Posterior vena cava (tissue), 2 donors: ENCODE measurements at regions of chr16 and their contacts with region 1.

Region 1: DNA sequence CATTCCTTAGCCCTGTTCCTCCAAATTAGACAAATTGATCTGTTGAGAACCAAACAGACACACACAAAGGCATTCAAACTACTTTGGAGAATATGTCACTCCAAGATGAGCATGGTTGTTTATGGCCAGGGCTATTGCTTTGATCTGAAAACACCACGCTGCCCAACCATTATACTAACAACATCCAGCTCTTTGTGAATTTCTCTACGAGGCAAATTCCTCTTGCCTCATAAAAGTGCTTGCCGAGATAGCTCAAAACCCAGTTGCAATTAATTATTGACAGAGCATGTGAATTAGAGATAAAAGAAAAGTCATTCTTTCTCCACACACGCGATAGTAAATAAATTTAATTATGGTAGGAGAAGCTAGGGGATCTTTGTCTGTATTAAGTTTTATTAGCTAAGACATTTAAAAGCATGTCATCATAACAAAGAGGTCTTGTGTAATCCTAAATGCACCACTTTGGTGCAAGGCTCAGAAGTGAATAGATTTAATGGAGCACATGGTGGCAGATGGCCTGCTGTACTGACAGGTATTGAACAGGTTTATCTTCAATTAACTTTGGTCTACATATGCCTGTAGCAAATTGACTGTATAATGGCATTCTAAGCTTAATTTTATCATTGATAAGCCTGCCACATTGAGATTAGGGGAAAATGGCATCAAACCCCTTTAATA is 441.8 kb downstream of the HS3ST4 start:
- DNase-seq: no peak

Region 2: GRCh38 chr16:26204138-26204537 is 70.6 kb after region 1 on chr16:
- intact Hi-C with region 1: loop called in 1 of 2 experiments (anchors 10 kb)
- DNase-seq: no peak